Naive thymus-derived CD4-positive, alpha-beta T cell (primary cell): ENCODE measurements at regions of chr5 and their contacts with region 1.

Region 1: DNA sequence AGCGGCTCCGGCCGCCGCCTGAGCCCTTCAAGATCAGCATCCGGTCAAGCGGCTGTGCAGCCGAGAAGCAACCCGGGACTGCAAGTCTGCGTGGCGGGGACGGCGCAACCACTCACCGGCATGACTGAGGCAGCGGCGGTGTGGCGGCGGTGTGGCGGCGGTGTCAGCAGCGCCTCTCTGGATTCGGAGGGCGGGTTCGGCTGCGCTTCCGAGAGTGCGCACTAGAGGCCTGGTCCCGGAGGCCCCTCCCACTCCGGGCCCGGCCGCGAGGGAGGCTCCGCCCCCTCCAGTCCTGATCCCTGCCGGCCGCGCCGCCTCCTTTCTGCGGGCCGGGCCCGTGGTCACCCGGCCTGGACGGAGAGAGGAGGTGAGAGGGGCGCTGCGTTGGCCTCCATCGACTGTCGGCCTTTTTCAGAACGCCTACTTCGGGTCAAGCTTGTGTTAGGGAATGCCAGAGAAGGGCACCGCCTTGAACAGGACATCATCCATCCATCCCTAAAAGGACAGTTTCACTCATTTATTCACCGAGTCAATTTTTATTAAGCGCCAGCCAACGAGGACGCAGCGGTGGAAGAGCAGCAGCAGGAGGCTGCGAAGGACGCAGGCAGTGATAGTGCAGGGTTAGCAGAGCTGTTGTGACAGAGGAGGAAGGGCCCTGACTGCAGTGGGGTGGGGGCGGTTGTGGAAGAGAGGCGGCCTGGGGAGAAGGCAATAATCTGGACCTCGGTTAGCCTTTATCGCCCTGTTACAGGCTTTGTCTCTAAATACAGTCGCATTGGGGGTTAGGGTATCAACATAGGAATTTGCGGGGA is at the start of gene ATOX1:
- DNase-seq: peak; percentile 85 to 93 (median 89)
- ATAC-seq: peak; percentile 100
- H3K4me3 ChIP-seq: peak within 1 kb of the TSS; percentile 94
- H3K4me3 Mint-ChIP-seq: peak within 1 kb of the TSS; percentile 88 to 99 (median 94)
- H3K27ac ChIP-seq: peak within 1 kb of the TSS; percentile 94
- H3K27ac Mint-ChIP-seq: peak within 1 kb of the TSS; percentile 88 to 98 (median 94)
- H3K4me1 ChIP-seq: peaks cover 14 to 20% of the 10 kb centered on the region in 2 donors
- H3K4me1 Mint-ChIP-seq: peaks cover 16 to 50% (median 39%) of the 10 kb centered on the region in 7 donors
- H3K27me3 ChIP-seq: no peaks in the 10 kb centered on the region
- H3K27me3 Mint-ChIP-seq: peaks cover 0 to 3% (median 0%) of the 10 kb centered on the region in 5 donors
- total RNA-seq, gene ATOX1: 14.8 to 58.2 (median 29.6) TPM

Region 2: DNA sequence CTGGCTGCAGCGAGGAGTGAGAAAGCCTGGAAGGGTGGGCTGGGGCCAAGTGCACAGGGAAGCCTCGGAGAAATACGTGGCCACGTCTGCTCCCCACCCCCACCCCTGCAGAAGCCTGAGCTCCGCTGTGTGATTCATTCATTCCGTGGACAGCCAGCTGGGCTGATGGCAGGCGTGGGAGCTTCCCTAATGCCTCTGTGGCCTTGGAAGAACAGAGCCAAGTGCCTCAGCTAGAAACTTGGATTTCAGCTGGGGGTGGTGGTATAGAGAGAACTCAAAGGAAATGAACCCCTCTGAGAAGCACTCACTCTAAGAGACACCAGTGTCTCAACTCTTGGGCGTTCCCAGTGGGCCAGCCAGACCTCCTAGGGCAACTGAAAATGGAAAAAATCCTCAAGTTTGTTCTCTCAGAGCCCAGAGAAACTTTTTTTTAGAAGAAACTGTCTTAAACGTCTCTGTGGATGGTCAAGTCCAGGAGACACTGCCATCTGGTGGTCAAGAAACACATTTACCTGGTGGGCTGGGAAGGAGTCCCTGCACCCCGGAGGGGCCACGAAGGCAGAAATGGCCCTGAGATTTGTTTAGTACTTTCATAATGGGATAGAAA is 18.2 kb before region 1 on chr5:
- CTCF ChIA-PET with region 1: interaction called, 4 read pairs
- POLR2A ChIA-PET with region 1: no interaction called
- intact Hi-C with region 1: loop called (anchors 1 to 2 kb)
- DNase-seq: peak in 7 of 9 donors; percentile 9 to 57 (median 47)
- ATAC-seq: peak; percentile 71
- H3K4me3 ChIP-seq: no peak overlapping the region
- H3K4me3 Mint-ChIP-seq: no peak overlapping the region
- H3K27ac ChIP-seq: no peak overlapping the region
- H3K27ac Mint-ChIP-seq: peak overlapping the region in 1 of 9 donors; percentile 23
- H3K4me1 ChIP-seq: peaks cover 5 to 8% of the 10 kb centered on the region in 2 donors
- H3K4me1 Mint-ChIP-seq: peaks cover 5 to 30% (median 20%) of the 10 kb centered on the region in 7 donors
- H3K27me3 ChIP-seq: no peaks in the 10 kb centered on the region
- H3K27me3 Mint-ChIP-seq: no peaks in the 10 kb centered on the region

Region 3: GRCh38 chr5:152389208-152389849 is 630.7 kb after region 1 on chr5:
- CTCF ChIA-PET with region 1: no interaction called
- POLR2A ChIA-PET with region 1: no interaction called
- intact Hi-C with region 1: no loop called
- DNase-seq: no peak
- ATAC-seq: no peak
- H3K4me3 ChIP-seq: no peak overlapping the region
- H3K4me3 Mint-ChIP-seq: no peak overlapping the region
- H3K27ac ChIP-seq: no peak overlapping the region
- H3K27ac Mint-ChIP-seq: no peak overlapping the region
- H3K4me1 ChIP-seq: no peaks in the 10 kb centered on the region
- H3K4me1 Mint-ChIP-seq: no peaks in the 10 kb centered on the region
- H3K27me3 ChIP-seq: no peaks in the 10 kb centered on the region
- H3K27me3 Mint-ChIP-seq: peaks cover 0 to 9% (median 4%) of the 10 kb centered on the region in 5 donors